ENCODE measurements at regions of chr16 and their contacts with region 1.

Region 1: GRCh38 chr16:11535471-11535870 is 51.2 kb downstream of the LITAF start:
- DNase-seq: no peak
- H3K4me3 Mint-ChIP-seq: no peak overlapping the region
- H3K27ac Mint-ChIP-seq: no peak overlapping the region
- H3K4me1 Mint-ChIP-seq: peaks cover 6% of the 10 kb centered on the region
- H3K27me3 Mint-ChIP-seq: no peaks in the 10 kb centered on the region

Region 2: GRCh38 chr16:11597239-11598101 is 62.0 kb after region 1 on chr16:
- intact Hi-C with region 1: loop called (anchors 2 kb)
- DNase-seq: no peak
- H3K4me3 Mint-ChIP-seq: no peak overlapping the region
- H3K27ac Mint-ChIP-seq: peak overlapping the region; percentile 79
- H3K4me1 Mint-ChIP-seq: peaks cover 11% of the 10 kb centered on the region
- H3K27me3 Mint-ChIP-seq: peaks cover 2% of the 10 kb centered on the region

Region 3: DNA sequence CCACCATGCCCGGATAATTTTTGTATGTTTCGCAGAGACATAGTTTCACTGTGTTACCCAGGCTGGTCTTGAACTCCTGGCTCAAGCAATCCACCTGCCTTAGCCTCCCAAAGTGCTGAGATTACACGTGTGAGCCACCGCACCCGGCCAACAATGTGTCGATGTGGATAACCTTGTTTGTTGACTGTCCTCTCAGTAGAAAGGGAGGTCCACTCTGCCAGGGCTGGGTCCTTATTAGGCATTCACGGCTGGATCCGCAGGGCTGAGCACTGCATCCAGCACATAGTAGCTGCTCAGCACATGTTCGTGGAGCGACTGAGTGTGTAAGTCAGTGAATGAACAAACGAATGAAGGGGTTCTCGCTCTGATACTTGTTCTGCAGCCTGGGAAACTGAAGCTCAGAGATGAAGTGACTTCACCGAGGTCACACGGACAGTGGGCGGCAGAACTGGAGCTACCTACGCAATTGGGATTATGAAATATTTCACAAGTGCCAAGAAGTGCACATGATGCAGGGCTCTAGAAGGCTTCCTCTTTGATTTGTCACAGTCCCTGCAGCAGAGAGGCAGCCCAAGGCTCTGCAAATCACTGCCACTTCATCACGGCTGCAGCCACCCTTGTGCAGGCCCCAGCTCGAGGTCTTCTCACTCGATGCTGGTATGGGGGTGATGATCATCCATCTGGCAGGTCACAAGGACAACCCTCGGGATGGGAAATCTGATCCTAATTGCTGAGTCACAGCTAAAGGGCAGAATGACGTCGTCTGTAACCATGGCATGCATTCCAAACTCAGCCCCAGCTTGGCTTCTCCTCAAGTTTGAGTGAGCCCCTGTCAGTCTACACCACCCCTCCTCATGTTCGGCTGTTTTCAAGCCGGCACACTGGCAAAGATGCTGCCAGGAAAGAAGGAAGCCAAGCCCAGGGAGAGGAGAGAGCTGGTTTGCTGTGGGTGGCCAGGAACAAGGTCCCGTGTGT is 104.7 kb after region 1 on chr16:
- intact Hi-C with region 1: loop called (anchors 1 kb)
- DNase-seq: no peak
- H3K4me3 Mint-ChIP-seq: no peak overlapping the region
- H3K27ac Mint-ChIP-seq: no peak overlapping the region
- H3K4me1 Mint-ChIP-seq: peaks cover 8% of the 10 kb centered on the region
- H3K27me3 Mint-ChIP-seq: peaks cover 21% of the 10 kb centered on the region

Region 4: DNA sequence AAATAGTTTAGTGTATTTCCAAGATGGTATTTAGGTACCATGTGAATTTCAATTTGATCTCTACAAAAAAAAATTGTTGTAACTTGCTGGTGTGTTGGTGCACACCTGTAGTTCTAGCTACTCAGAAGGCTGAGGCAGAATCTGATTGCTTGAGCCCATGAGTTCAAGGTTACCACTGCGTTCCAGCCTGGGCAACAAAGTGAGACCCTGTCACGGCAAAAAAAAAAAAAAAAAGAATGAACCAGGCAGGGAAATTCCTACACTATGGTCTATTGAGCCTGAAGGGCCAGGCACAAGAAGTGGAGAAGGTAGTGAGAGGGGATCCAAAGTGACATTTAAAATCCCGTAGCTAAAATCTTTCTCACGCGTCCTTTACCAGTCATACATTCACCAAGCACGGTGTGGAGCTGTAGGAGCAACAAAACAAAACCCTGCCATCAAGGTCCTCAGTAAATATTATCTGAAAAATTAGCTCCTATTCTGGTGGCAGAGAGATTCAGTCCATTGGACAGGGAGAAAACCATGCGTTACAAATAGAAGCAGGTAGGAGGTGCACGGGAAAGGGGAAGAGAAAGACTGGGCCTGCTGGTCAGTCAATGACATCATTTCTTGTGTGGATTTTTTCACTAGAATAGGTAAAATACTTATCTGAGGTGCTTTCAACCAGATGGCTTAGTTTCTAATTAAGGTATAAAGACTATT is 179.9 kb after region 1 on chr16:
- intact Hi-C with region 1: loop called (anchors 2 kb)
- DNase-seq: no peak
- H3K4me3 Mint-ChIP-seq: no peak overlapping the region
- H3K27ac Mint-ChIP-seq: no peak overlapping the region
- H3K4me1 Mint-ChIP-seq: peaks cover 5% of the 10 kb centered on the region
- H3K27me3 Mint-ChIP-seq: no peaks in the 10 kb centered on the region

Measured in activated CD4-positive, alpha-beta T cell treated with anti-CD3 and anti-CD28 coated beads, Interleukin-2, amount 10 ng/mL, durations not matched to agents 24 days and 14 days (primary cell).